Testis (tissue), 5 donors: ENCODE measurements at regions of chr18 and their contacts with region 1.

Region 1: DNA sequence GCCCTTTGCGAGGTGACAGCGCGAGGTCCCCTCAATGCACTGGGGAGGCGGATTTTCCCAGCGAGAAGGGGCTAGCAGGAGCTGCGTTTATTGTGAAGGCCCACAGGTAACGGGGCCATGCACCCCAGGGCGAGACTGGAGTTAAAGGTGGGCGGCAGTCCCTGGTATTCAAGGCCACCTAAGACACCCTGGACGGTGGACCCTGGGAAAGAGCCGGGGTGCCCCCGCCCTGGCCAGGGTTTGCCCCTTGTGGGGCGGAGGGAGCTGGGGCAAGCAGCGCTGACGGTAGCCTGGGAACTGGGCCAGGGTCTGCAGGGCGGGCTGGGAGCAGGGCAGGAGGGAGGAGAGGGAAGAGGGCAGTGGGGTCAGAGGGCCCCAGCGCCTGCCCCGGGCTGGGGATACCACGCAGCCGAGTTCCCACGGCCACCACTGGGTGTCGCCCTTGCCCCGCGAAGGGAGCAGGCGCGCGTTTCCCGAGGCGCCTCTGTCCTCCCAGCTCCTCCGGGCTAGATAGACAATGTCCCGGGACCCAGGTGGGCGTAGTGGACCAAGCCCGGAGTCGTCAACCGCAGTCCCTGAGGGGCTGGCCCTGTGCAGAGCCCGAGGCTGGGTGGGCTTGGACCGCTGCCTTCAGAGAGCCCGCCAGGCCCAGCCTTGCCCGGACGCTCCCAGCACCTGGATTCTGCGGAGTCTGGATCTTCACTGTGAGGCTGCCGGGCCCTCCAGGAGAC is 80.2 kb downstream of the SMAD4 start:
- DNase-seq: peak; percentile 64
- H3K4me3 ChIP-seq: no peak overlapping the region
- H3K27ac ChIP-seq: no peak overlapping the region
- H3K4me1 ChIP-seq: no peaks in the 10 kb centered on the region
- H3K27me3 ChIP-seq: no peaks in the 10 kb centered on the region
- CTCF ChIP-seq: peak; percentile 65 to 88 (median 83)
- POLR2A ChIP-seq: no peak

Region 2: GRCh38 chr18:51383116-51383515 is 272.9 kb after region 1 on chr18:
- intact Hi-C with region 1: loop called (anchors 10 kb)
- DNase-seq: no peak
- H3K4me3 ChIP-seq: no peak overlapping the region
- H3K27ac ChIP-seq: no peak overlapping the region
- H3K4me1 ChIP-seq: no peaks in the 10 kb centered on the region
- H3K27me3 ChIP-seq: no peaks in the 10 kb centered on the region
- CTCF ChIP-seq: no peak
- POLR2A ChIP-seq: no peak